ENCODE measurements at regions of chr2 and their contacts with region 1.

Region 1: DNA sequence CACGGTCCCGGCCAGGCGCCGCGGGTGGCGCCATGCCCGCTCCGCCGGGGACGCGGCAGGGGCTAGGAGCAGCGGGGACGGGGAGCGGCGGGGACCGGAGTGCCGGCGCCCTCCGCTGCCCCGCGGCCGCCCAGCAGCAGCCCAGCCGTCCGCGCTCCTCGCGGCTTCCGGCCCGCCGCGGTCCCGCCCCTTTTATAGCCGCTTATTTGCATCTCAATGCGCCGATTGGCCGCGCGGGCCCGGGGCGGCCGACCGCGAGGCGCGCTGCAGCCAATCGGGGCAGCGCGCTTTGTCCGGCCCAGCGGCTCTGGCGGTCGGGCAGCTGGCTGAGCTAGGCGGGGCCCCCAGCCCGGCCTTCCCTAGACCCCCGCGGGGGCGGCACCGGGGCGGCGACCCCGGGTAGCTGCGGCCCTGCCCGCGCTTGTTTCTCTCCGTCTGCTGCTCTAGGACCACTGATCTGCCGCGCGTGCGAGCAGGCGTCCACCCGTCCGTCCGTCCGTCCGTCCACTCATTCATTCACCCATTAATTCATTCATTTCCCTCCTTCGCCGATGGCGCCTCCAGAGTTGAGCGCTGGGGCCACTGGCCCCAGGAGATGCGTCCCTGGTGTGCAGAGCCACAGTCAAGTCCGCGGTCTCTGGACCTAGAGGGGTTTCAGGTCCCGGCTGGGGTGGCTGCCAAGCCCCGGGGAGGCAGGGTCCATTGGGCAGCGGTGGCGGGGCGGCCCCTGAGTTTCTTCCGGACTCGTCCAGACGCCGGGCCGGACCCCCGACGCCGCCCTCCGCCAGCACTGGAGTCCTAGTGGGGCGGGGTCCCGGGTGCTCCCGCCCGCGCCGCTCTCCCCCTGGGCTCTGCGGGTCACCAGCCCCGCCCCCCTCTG is at the start of gene HES6:
- DNase-seq: peak; percentile 90 to 96 (median 92)
- ATAC-seq: peak; percentile 88
- H3K4me3 ChIP-seq: peak within 1 kb of the TSS; percentile 74
- H3K27ac ChIP-seq: peak within 1 kb of the TSS; percentile 77
- H3K4me1 ChIP-seq: peaks cover 24 to 50% of the 10 kb centered on the region in 2 experiments
- H3K27me3 ChIP-seq: no peaks in the 10 kb centered on the region
- CTCF ChIP-seq: no peak
- EP300 ChIP-seq: no peak
- POLR2A ChIP-seq: peak; percentile 68; the same call in 1 of the 2 replicates
- RAD21 ChIP-seq: 0 out of 4 replicates have a peak, but pooled peaks of 1 of the 2 experiments have one; percentile 4
- polyA plus RNA-seq, gene HES6: 6.2 to 9.0 TPM

Region 2: DNA sequence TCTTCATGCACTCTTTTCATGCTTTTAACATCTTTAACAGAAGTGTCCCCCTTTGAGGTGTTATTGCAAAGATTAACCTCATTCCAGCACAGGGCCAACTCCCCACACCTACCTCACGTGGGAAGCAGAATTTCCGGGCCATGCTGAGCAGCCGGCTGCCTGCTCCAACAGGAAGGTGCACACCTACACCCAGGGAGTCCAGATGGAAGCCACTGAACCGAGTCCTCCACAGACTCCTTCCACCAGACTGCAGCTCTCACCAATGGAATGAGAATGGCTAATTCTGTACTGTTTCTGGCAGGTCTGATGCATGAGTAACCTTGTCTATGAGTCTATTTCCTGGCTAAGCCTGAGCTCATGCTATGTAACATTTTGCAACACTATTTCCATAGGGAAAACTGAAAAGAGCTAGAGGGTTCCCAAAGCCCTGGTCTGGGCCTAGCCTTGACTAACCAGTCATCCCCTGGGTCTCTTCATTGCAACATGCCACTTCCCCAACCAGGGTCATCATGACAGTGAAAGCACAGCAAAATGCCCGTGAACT is 70.3 kb before region 1 on chr2:
- CTCF ChIA-PET with region 1: no interaction called
- POLR2A ChIA-PET with region 1: no interaction called
- in situ Hi-C with region 1: no loop called
- intact Hi-C with region 1: loop called (anchors 5 kb)
- DNase-seq: no peak
- ATAC-seq: peak; percentile 11; the same call in 2 of the 3 replicates
- H3K4me3 ChIP-seq: no peak overlapping the region
- H3K27ac ChIP-seq: peak overlapping the region; percentile 81
- H3K4me1 ChIP-seq: peaks cover 30 to 33% of the 10 kb centered on the region in 2 experiments
- H3K27me3 ChIP-seq: no peaks in the 10 kb centered on the region
- CTCF ChIP-seq: no peak
- EP300 ChIP-seq: no peak
- POLR2A ChIP-seq: no peak
- RAD21 ChIP-seq: no peak

Region 3: GRCh38 chr2:238320246-238320647 is 80.1 kb after region 1 on chr2 and contains the start of gene TRAF3IP1:
- CTCF ChIA-PET with region 1: no interaction called
- POLR2A ChIA-PET with region 1: no interaction called
- in situ Hi-C with region 1: no loop called
- intact Hi-C with region 1: no loop called
- DNase-seq: peak; percentile 91 to 95 (median 95)
- ATAC-seq: peak; percentile 98
- H3K4me3 ChIP-seq: peak within 1 kb of the TSS; percentile 52
- H3K27ac ChIP-seq: no peak within 1 kb of the TSS
- H3K4me1 ChIP-seq: peaks cover 0 to 25% of the 10 kb centered on the region in 2 experiments; a peak in 3 of 5 replicates
- H3K27me3 ChIP-seq: no peaks in the 10 kb centered on the region
- CTCF ChIP-seq: no peak
- EP300 ChIP-seq: no peak
- POLR2A ChIP-seq: no peak
- RAD21 ChIP-seq: no peak
- polyA plus RNA-seq, gene TRAF3IP1: 1.3 to 1.4 TPM

Measured in K562 (cell line).